Activated CD4-positive, alpha-beta memory T cell treated with anti-CD3 and anti-CD28 coated beads for 36 hours (primary cell): ENCODE measurements at regions of chr16 and their contacts with region 1.

Region 1: GRCh38 chr16:22353191-22353919 is 21.1 kb downstream of the CDR2 start:
- DNase-seq: no peak
- H3K4me3 Mint-ChIP-seq: peak overlapping the region; percentile 36
- H3K27ac Mint-ChIP-seq: peak overlapping the region; percentile 93
- H3K4me1 Mint-ChIP-seq: peaks cover 58% of the 10 kb centered on the region
- H3K27me3 Mint-ChIP-seq: no peaks in the 10 kb centered on the region

Region 2: DNA sequence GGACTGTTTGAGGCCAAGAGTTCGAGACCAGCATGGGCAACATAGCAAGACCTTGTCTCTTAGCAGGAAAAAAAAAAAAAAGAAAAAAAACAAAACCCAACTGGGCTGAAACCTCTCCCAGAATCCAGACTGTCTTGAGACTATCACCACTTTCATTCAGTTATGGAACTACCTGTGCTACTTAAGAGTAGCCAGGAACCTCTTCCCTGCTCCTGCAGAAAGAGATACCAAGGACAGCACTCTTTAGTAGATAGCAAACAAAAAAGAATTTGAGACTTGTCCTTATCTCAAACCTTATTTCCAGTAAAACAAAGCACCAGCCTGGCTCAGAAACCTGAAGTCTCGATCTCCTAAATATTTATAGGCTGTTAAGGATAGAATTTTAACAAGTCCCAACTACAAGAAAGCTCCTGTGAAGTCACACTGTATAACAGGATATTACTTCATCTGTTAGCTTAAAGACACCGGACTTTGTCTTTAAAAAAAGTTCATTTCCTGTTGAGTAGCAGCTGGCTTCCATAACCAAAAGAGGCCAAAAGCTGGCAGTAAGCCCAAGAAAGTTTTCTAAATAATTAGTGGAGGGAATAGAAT is 16.0 kb after region 1 on chr16:
- CTCF ChIA-PET with region 1: interaction called, 5 read pairs
- POLR2A ChIA-PET with region 1: interaction called, 10 read pairs
- intact Hi-C with region 1: loop called (anchors 1 kb)
- DNase-seq: no peak
- H3K4me3 Mint-ChIP-seq: no peak overlapping the region
- H3K27ac Mint-ChIP-seq: peak overlapping the region; percentile 62
- H3K4me1 Mint-ChIP-seq: peaks cover 75% of the 10 kb centered on the region
- H3K27me3 Mint-ChIP-seq: no peaks in the 10 kb centered on the region

Region 3: DNA sequence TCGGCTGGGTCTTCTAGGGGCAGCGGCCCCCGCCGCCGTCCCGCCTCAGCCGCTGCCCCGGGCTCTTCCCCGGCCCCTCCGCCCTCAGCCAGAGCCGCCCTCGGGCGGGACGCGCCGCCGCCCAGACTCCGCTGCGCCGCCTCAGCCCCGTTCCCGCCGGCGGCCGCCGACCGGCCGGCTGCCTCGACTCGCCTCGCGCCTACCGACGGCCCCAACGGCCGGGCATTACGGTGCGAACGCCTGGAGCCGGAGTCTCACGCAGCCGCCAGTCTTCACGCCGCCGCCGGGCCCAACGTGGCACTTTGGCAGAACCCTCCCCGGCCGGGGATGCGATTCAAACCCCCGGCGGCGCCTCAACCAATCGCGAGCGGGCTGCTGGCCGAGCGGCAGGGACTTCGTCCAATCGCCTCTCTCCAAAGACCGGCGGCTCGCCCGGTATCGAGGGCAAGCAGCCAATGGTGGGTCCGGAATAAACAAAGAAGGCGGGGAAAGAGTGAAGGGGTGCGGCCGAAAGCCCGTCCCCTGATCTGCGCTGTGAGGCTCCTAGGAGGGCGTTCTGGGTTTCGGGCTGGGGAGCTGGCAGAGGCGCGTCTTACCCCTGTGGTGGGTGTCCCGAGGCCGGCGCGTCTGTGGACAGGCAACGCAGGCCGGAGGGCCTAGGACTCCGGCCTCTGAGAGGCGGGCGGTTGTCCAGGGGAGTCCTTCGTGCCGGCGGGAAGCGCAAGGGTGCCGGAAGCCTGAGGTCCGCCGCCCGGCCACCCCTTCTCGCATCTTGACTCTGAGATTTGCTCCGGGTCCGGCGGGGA is 21.2 kb after region 1 on chr16 and contains the start of gene CDR2:
- CTCF ChIA-PET with region 1: interaction called, 5 read pairs
- POLR2A ChIA-PET with region 1: interaction called, 10 read pairs
- intact Hi-C with region 1: loop called (anchors 1 kb)
- DNase-seq: peak; percentile 99
- H3K4me3 Mint-ChIP-seq: peak within 1 kb of the TSS; percentile 89
- H3K27ac Mint-ChIP-seq: peak within 1 kb of the TSS; percentile 93
- H3K4me1 Mint-ChIP-seq: peaks cover 37% of the 10 kb centered on the region
- H3K27me3 Mint-ChIP-seq: no peaks in the 10 kb centered on the region
- total RNA-seq, gene CDR2: 44.0 to 44.4 TPM

Region 4: DNA sequence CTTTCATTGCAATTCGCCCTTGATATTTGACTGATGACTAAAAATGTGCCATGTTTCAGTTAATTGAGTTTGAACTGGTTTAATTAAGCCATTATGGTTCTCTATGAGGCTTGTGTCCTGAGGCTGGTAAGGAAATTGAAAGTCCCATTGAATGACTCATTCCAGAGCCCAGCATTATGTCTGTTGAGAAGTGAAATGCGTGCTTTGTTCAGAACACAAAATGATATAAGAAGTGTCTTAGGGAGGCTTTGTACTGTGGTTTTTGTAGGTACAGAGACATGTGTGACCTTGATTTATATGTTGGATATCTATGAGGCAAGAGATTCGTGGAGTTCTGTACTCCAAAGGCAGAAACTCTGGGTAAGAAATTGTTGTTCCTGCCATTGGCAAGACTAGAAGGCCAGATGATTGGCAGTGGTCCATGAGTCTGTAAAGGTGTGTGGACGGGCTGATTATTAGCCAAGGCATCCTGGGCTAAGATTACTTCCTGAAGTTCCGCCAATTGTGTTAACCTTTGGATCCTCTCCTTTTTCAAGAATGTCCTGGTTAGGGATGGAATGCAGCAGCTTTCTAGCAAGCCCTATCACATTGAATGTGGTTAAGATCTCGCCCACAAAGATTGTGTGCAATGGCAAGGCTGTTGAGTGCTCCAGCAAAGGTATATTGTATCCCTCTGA is 261.1 kb after region 1 on chr16:
- CTCF ChIA-PET with region 1: no interaction called
- POLR2A ChIA-PET with region 1: no interaction called
- intact Hi-C with region 1: no loop called
- DNase-seq: no peak
- H3K4me3 Mint-ChIP-seq: no peak overlapping the region
- H3K27ac Mint-ChIP-seq: no peak overlapping the region
- H3K4me1 Mint-ChIP-seq: no peaks in the 10 kb centered on the region
- H3K27me3 Mint-ChIP-seq: peaks cover 11% of the 10 kb centered on the region